Left ventricle myocardium inferior (tissue), 1 donor: ENCODE measurements at regions of chr13 and their contacts with region 1.

Region 1: GRCh38 chr13:98576963-98577822 is at the start of gene STK24:
- DNase-seq: peak; percentile 80
- H3K4me3 ChIP-seq: peak within 1 kb of the TSS; percentile 97
- H3K27ac ChIP-seq: peak within 1 kb of the TSS; percentile 97
- H3K4me1 ChIP-seq: peaks cover 64% of the 10 kb centered on the region
- H3K27me3 ChIP-seq: no peaks in the 10 kb centered on the region
- CTCF ChIP-seq: no peak
- total RNA-seq, gene STK24: 66.2 TPM

Region 2: GRCh38 chr13:98454389-98454881 is 122.8 kb before region 1 on chr13:
- intact Hi-C with region 1: loop called (anchors 10 kb)
- DNase-seq: no peak
- H3K4me3 ChIP-seq: peak overlapping the region; percentile 18
- H3K27ac ChIP-seq: peak overlapping the region; percentile 86
- H3K4me1 ChIP-seq: peaks cover 76% of the 10 kb centered on the region
- H3K27me3 ChIP-seq: no peaks in the 10 kb centered on the region
- CTCF ChIP-seq: no peak

Region 3: GRCh38 chr13:98484289-98485219 is 92.6 kb before region 1 on chr13:
- intact Hi-C with region 1: loop called (anchors 10 kb)
- DNase-seq: peak; percentile 51
- H3K4me3 ChIP-seq: peak overlapping the region; percentile 9
- H3K27ac ChIP-seq: peak overlapping the region; percentile 88
- H3K4me1 ChIP-seq: peaks cover 95% of the 10 kb centered on the region
- H3K27me3 ChIP-seq: no peaks in the 10 kb centered on the region
- CTCF ChIP-seq: no peak